Activated CD4-positive, alpha-beta T cell treated with anti-CD3 and anti-CD28 coated beads, Interleukin-2, amount 10 ng/mL, durations not matched to agents 24 days and 14 days (primary cell): ENCODE measurements at regions of chr4 and their contacts with region 1.

Region 1: DNA sequence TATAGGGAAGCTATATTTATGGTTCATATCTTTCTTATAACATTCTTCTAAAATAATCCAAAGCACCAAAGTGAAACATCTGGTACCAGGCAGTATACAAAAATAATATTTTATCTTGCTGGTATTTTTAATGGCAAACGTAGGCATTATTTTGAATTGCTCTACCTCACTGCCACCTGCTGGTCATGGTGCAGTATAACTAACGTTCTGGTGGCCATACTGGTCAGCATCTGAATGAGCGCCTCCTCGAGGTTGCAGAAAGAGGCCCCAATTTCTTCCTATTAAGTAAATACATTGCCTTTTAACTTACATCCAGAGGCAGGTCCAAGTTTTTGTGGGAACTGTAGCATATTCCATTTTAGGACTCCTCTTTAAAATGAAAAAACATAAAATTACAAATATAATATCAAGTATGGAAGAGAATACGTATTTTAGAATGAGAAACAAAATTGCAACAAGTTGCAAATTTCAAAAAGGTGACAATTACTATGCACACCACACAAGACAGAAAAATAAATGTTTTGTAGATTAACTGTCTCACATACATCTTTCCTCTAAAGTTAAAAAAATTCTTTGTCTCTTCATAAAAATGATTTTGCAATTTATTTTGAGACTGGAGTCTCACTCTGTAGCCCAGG is 22.9 kb upstream of the CWH43 start:
- DNase-seq: peak; percentile 91
- H3K4me3 Mint-ChIP-seq: no peak overlapping the region
- H3K27ac Mint-ChIP-seq: no peak overlapping the region
- H3K4me1 Mint-ChIP-seq: no peaks in the 10 kb centered on the region
- H3K27me3 Mint-ChIP-seq: peaks cover 18% of the 10 kb centered on the region

Region 2: GRCh38 chr4:48445704-48446103 is 517.5 kb before region 1 on chr4:
- intact Hi-C with region 1: loop called (anchors 5 kb)
- DNase-seq: no peak
- H3K4me3 Mint-ChIP-seq: no peak overlapping the region
- H3K27ac Mint-ChIP-seq: no peak overlapping the region
- H3K4me1 Mint-ChIP-seq: no peaks in the 10 kb centered on the region
- H3K27me3 Mint-ChIP-seq: peaks cover 4% of the 10 kb centered on the region

Region 3: GRCh38 chr4:48681856-48682255 is 281.3 kb before region 1 on chr4:
- intact Hi-C with region 1: loop called (anchors 5 kb)
- DNase-seq: peak; percentile 68
- H3K4me3 Mint-ChIP-seq: no peak overlapping the region
- H3K27ac Mint-ChIP-seq: peak overlapping the region; percentile 42
- H3K4me1 Mint-ChIP-seq: peaks cover 24% of the 10 kb centered on the region
- H3K27me3 Mint-ChIP-seq: no peaks in the 10 kb centered on the region

Region 4: GRCh38 chr4:48710446-48711209 is 252.5 kb before region 1 on chr4:
- intact Hi-C with region 1: no loop called
- DNase-seq: no peak
- H3K4me3 Mint-ChIP-seq: no peak overlapping the region
- H3K27ac Mint-ChIP-seq: no peak overlapping the region
- H3K4me1 Mint-ChIP-seq: peaks cover 8% of the 10 kb centered on the region
- H3K27me3 Mint-ChIP-seq: no peaks in the 10 kb centered on the region

Region 5: DNA sequence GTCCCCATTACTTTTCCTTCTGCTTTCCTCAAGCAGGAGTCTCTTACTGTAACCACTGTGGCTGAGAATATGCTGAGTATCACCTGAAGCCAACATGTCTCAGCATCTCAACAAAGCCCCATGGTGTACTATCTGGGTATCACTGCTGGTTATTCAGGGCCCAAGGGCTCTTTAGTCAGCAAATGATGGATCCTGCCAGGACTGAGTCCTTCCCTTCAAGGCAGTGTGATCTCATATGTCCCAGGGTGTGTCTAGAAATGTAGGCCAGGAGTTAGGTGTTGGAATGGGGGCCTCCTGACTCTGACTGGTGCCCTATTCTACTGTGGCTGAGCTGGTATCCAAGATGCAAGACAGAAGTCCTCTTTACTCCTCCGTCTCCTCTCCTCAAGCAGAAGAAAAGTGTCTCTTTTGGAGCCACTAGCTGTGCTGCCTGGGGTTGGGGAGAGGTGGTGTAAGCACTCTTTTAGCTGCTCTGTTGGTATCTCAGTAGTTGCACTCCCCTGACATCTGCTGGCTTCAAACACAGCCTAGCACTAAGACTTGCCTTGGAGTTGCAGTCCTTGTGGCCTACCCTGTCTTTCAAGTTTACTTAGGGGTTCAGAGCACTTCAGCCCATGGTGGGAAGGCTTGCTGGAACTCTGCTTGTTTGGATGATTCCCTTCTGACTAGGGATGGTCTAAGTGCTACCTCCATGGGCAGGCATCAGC is 85.2 kb before region 1 on chr4:
- intact Hi-C with region 1: loop called (anchors 5 kb)
- DNase-seq: no peak
- H3K4me3 Mint-ChIP-seq: no peak overlapping the region
- H3K27ac Mint-ChIP-seq: no peak overlapping the region
- H3K4me1 Mint-ChIP-seq: no peaks in the 10 kb centered on the region
- H3K27me3 Mint-ChIP-seq: no peaks in the 10 kb centered on the region

Region 6: GRCh38 chr4:48991357-48991756 is 28.2 kb after region 1 on chr4:
- intact Hi-C with region 1: no loop called
- DNase-seq: no peak
- H3K4me3 Mint-ChIP-seq: no peak overlapping the region
- H3K27ac Mint-ChIP-seq: no peak overlapping the region
- H3K4me1 Mint-ChIP-seq: no peaks in the 10 kb centered on the region
- H3K27me3 Mint-ChIP-seq: peaks cover 34% of the 10 kb centered on the region